MCF 10A (cell line): ENCODE measurements at regions of chr15 and their contacts with region 1.

Region 1: DNA sequence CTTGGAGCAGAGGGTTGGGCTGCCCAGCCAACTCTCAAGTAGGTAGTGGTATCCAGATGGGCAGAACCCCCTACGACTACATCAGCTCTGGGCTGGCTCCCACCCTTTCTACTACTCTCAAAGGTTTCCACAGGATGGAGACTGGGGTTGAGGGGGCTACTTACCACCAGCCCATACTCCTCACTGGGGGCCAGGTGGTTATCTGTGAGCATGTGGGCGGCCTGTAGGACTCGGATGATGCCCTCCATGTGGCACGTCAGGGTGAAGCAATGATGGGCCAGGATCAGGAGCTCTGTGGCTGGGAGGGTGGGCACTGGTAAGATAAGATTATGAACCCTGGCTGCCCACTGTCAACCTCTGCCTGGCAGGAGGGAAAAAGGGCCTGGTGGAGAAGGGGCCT is 33.4 kb downstream of the EIF3J start:
- DNase-seq: no peak
- H3K4me3 Mint-ChIP-seq: no peak overlapping the region
- H3K27ac Mint-ChIP-seq: no peak overlapping the region
- H3K4me1 Mint-ChIP-seq: no peaks in the 10 kb centered on the region
- H3K27me3 Mint-ChIP-seq: no peaks in the 10 kb centered on the region
- CTCF ChIP-seq: no peak

Region 2: DNA sequence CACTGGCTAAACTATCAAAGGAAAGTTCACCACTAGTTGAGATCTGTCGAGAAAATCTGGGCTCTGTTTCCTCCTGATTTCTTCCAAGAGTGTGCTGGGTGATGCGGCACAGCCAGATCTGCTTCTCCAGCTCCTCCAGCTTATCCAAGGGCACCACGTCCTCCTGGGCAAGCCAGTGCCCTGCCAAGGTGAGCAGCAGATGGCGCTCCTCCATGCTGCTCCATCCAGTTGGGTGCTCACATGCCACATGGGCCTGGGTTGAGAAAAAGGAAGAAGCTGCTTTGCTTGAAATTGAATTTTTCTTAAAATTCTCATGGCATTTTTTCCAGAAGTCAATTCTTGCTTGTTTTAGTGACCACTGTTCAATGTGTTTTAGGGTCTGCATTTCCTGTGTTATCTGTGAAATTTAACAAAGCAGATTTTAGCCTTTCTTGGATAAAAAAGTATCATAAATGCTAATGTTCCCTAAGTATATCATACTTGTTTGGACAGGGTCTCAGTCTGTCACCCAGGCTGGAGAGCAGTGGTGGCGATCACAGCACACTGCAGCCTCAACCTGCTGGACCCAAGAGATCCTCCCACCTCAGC is 13.9 kb after region 1 on chr15:
- CTCF ChIA-PET with region 1: interaction called, 35 read pairs
- POLR2A ChIA-PET with region 1: interaction called, 3 read pairs
- intact Hi-C with region 1: no loop called
- DNase-seq: peak; percentile 66
- H3K4me3 Mint-ChIP-seq: no peak overlapping the region
- H3K27ac Mint-ChIP-seq: no peak overlapping the region
- H3K4me1 Mint-ChIP-seq: no peaks in the 10 kb centered on the region
- H3K27me3 Mint-ChIP-seq: no peaks in the 10 kb centered on the region
- CTCF ChIP-seq: peak; percentile 37

Region 3: GRCh38 chr15:44593042-44593736 is 22.8 kb after region 1 on chr15:
- CTCF ChIA-PET with region 1: interaction called, 10 read pairs
- POLR2A ChIA-PET with region 1: no interaction called
- intact Hi-C with region 1: no loop called
- DNase-seq: peak; percentile 28
- H3K4me3 Mint-ChIP-seq: no peak overlapping the region
- H3K27ac Mint-ChIP-seq: no peak overlapping the region
- H3K4me1 Mint-ChIP-seq: no peaks in the 10 kb centered on the region
- H3K27me3 Mint-ChIP-seq: no peaks in the 10 kb centered on the region
- CTCF ChIP-seq: peak; percentile 38

Region 4: GRCh38 chr15:44918136-44918535 is 347.8 kb after region 1 on chr15:
- CTCF ChIA-PET with region 1: no interaction called
- POLR2A ChIA-PET with region 1: no interaction called
- intact Hi-C with region 1: loop called (anchors 5 kb)
- DNase-seq: no peak
- H3K4me3 Mint-ChIP-seq: no peak overlapping the region
- H3K27ac Mint-ChIP-seq: no peak overlapping the region
- H3K4me1 Mint-ChIP-seq: no peaks in the 10 kb centered on the region
- H3K27me3 Mint-ChIP-seq: no peaks in the 10 kb centered on the region
- CTCF ChIP-seq: no peak